Activated naive CD4-positive, alpha-beta T cell treated with anti-CD3 and anti-CD28 coated beads for 36 hours (primary cell): ENCODE measurements at regions of chr9 and their contacts with region 1.

Region 1: GRCh38 chr9:136728080-136728547 is 14.6 kb downstream of the LCN10 start:
- DNase-seq: peak; percentile 89
- H3K4me3 Mint-ChIP-seq: peak overlapping the region; percentile 92
- H3K27ac Mint-ChIP-seq: no peak overlapping the region
- H3K4me1 Mint-ChIP-seq: peaks cover 51% of the 10 kb centered on the region
- H3K27me3 Mint-ChIP-seq: no peaks in the 10 kb centered on the region

Region 2: GRCh38 chr9:136686794-136687711 is 41.1 kb before region 1 on chr9 and contains the start of gene AGPAT2:
- CTCF ChIA-PET with region 1: no interaction called
- intact Hi-C with region 1: loop called (anchors 2 kb)
- DNase-seq: peak; percentile 65
- H3K4me3 Mint-ChIP-seq: peak within 1 kb of the TSS; percentile 74
- H3K27ac Mint-ChIP-seq: no peak within 1 kb of the TSS
- H3K4me1 Mint-ChIP-seq: peaks cover 3% of the 10 kb centered on the region
- H3K27me3 Mint-ChIP-seq: no peaks in the 10 kb centered on the region
- total RNA-seq, gene AGPAT2: 8.7 to 9.4 TPM